Activated CD8-positive, alpha-beta T cell treated with anti-CD3 and anti-CD28 coated beads for 36 hours (primary cell): ENCODE measurements at regions of chr5 and their contacts with region 1.

Region 1: DNA sequence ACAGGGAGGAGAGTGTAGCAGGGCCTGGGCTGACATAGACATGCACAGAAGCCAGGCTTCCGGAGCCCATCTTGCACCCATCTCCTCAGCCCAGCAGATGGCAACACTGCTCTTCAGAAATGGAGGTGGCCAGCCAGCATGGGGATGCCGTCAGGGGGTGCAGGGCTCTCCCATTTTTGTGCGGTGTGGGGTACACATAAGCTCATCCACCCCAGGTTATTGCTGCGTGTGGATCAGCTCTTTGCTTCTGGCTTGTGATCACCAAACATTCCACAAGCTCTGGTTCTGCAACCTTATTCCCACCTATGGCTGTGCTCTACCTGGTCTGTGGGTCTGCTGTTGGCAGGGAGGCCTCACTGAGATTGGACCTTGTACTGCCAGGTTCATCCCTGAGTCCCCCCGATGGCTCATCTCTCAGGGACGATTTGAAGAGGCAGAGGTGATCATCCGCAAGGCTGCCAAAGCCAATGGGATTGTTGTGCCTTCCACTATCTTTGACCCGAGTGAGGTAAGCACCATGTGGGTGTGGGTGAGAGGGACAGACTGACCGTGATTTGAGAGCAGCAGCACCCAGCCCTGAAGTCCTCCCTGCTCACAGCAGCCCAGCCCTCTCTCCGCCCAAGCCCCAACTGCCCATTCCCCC is 17.3 kb downstream of the SLC22A5 start:
- DNase-seq: peak; percentile 87
- ATAC-seq: peak; percentile 92
- H3K4me3 Mint-ChIP-seq: no peak overlapping the region
- H3K27ac Mint-ChIP-seq: peak overlapping the region; percentile 25
- H3K4me1 Mint-ChIP-seq: peaks cover 40% of the 10 kb centered on the region
- H3K27me3 Mint-ChIP-seq: no peaks in the 10 kb centered on the region
- CTCF ChIP-seq: peak; percentile 91

Region 2: DNA sequence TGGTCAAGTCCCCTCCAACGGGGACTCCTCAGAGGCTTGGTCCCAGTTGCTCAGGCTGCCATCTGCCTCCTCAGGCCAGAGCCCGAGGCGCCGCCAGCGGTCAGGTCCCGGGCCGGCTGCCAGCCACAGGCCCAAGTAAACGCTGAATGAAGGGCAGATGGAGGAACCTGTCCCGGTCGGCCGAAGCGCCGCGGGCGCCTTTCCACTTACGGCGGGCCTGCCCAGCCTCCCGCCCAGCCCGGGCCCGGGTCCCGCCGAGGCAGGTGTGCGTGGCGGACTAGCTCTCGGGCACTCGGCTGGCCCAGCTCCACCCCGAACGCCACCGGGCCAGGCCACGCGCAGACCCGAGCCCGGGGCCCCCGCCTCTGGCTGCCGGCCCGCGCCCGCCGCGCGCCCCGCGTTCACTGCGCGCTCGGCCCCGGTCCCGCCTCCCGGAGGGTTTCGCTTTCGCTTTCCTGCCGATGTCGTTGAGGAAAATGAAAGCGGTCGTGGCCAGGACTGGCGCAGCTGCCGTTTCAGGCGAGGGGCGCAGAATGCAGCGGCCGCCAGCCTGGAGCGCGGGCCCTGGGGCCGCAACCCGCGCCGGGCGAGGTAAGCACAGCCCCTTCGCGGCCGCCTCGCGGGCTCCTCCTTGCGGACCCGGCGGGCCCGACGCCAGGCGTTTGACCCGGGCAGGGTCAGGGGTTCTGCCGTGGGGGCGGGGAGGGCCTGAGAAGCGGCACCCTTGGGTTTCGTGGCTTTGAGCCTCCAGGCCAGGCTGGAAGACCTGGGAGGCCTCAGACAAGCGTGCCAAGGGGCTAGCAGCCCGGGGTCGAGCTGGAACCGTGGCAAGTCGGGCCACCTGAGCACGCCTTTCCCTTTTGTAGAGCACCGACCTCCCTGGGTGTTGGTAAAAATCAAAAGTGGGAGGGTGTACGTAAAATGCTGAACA is 24.0 kb after region 1 on chr5:
- CTCF ChIA-PET with region 1: interaction called, 51 read pairs
- POLR2A ChIA-PET with region 1: interaction called, 12 read pairs
- intact Hi-C with region 1: no loop called
- DNase-seq: peak; percentile 89
- ATAC-seq: peak; percentile 71
- H3K4me3 Mint-ChIP-seq: peak overlapping the region; percentile 93
- H3K27ac Mint-ChIP-seq: peak overlapping the region; percentile 100
- H3K4me1 Mint-ChIP-seq: peaks cover 63% of the 10 kb centered on the region
- H3K27me3 Mint-ChIP-seq: no peaks in the 10 kb centered on the region
- CTCF ChIP-seq: peak; percentile 53

Region 3: GRCh38 chr5:132466433-132467286 is 79.9 kb after region 1 on chr5:
- CTCF ChIA-PET with region 1: interaction called, 30 read pairs
- POLR2A ChIA-PET with region 1: interaction called, 7 read pairs
- intact Hi-C with region 1: no loop called
- DNase-seq: peak; percentile 89
- ATAC-seq: peak; percentile 69
- H3K4me3 Mint-ChIP-seq: peak overlapping the region; percentile 66
- H3K27ac Mint-ChIP-seq: peak overlapping the region; percentile 88
- H3K4me1 Mint-ChIP-seq: peaks cover 87% of the 10 kb centered on the region
- H3K27me3 Mint-ChIP-seq: no peaks in the 10 kb centered on the region
- CTCF ChIP-seq: no peak

Region 4: DNA sequence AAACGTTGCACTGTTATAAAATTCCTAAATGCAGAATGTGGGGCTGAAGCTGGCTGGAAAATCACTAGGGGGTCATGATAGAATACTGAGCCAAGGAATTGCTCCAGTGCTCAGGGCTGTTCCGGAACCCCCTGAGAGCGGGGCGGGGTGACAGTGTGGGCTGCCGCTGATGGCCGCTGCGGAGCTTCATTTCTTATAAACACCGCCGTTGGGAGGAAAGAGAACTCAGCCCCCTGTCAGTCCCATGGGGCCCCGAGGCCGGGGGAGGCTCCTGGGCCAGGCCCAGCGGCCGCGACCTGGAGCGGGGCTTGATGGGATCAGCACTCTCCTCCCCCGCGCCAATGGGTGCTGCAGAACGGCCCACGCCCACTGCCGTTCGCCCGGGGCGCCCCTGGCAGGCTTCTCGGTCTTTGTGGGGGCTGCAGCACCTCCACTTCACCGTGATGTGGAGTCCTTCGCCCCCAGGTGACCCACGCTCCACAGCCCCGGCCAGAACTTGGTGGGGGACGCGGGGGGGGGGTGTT is 109.0 kb after region 1 on chr5:
- CTCF ChIA-PET with region 1: interaction called, 342 read pairs
- POLR2A ChIA-PET with region 1: interaction called, 61 read pairs
- intact Hi-C with region 1: no loop called
- DNase-seq: peak; percentile 94
- ATAC-seq: peak; percentile 60
- H3K4me3 Mint-ChIP-seq: peak overlapping the region; percentile 90
- H3K27ac Mint-ChIP-seq: peak overlapping the region; percentile 99
- H3K4me1 Mint-ChIP-seq: peaks cover 67% of the 10 kb centered on the region
- H3K27me3 Mint-ChIP-seq: no peaks in the 10 kb centered on the region
- CTCF ChIP-seq: no peak

Region 5: DNA sequence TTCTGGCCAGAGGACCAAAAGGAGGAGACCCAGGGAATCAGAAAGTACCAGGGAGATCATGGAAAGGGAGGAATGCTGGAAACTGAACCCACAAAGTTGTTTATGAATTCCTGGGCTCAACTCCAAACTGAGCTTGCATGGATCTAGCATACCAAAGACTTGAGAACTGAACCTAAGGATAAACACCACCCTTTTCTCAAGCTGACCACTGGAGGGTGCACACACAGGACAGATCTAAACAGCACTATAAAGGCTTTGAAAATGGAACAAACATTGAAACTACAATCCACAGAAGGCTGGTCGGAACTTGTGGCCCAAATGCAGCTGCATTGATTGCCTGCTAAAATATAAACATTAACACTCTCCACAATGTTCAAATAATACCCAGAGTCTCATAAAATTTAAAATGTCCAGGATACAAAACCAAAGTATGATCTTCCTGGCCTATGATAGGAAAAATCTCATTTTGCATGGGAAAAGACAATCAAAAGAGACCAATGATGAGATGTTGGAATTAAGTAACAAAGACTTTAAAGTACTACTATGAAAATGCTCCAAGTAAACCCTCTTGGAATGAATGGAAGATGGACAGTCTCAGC is 119.4 kb after region 1 on chr5:
- CTCF ChIA-PET with region 1: interaction called, 342 read pairs
- POLR2A ChIA-PET with region 1: interaction called, 16 read pairs
- intact Hi-C with region 1: loop called (anchors 1 kb)
- DNase-seq: peak; percentile 44
- ATAC-seq: peak; percentile 57
- H3K4me3 Mint-ChIP-seq: no peak overlapping the region
- H3K27ac Mint-ChIP-seq: no peak overlapping the region
- H3K4me1 Mint-ChIP-seq: peaks cover 12% of the 10 kb centered on the region
- H3K27me3 Mint-ChIP-seq: peaks cover 15% of the 10 kb centered on the region
- CTCF ChIP-seq: peak; percentile 45